CD14-positive monocyte (primary cell): ENCODE measurements at regions of chr5 and their contacts with region 1.

Region 1: GRCh38 chr5:173742432-173742816 is 126.0 kb upstream of the BOD1 start:
- DNase-seq: peak; percentile 63 to 73 (median 65)
- H3K4me3 ChIP-seq: peak overlapping the region in 1 of 3 experiments; percentile 47
- H3K4me3 Mint-ChIP-seq: peak overlapping the region in 1 of 2 donors; percentile 72
- H3K27ac ChIP-seq: peak overlapping the region; percentile 73 to 88
- H3K27ac Mint-ChIP-seq: peak overlapping the region; percentile 86 to 97 (median 95)
- H3K4me1 ChIP-seq: peaks cover 52 to 53% of the 10 kb centered on the region in 2 donors
- H3K4me1 Mint-ChIP-seq: peaks cover 67% of the 10 kb centered on the region
- H3K27me3 ChIP-seq: no peaks in the 10 kb centered on the region
- H3K27me3 Mint-ChIP-seq: peaks cover 0 to 9% (median 0%) of the 10 kb centered on the region in 3 donors
- CTCF ChIP-seq: no peak

Region 2: DNA sequence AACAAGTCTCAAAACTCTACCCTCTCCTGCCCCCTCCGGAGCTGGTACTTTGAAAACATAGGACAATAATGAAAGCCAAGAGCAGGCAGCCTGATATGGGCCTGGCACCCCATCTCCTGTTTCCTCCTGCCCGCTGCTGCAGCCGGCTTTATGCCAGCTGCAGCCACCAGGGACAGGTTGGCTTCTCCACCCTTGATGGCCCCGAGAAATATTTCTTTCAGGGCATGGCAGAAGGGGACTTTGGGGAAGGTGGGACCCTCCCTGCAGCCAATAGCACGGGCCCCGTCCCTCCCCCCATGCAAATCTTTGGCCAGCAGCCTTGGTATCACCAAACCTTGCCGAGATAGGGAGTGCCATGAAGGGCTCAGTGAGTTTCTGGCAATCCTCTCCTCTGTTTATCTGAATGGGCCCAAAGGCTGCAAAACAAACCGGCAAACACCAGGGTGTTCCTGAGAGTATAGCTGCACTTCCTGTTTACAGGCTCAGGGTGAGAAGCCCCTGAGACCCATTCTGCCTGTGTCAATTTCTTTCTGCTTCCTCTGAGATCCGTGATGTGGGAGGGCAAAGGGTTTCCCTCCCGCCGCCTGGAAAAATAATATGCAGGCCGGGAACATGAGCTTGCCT is 52.6 kb before region 1 on chr5:
- intact Hi-C with region 1: no loop called
- DNase-seq: peak in 1 of 3 donors; percentile 9
- H3K4me3 ChIP-seq: no peak overlapping the region
- H3K4me3 Mint-ChIP-seq: no peak overlapping the region
- H3K27ac ChIP-seq: no peak overlapping the region
- H3K27ac Mint-ChIP-seq: peak overlapping the region in 1 of 7 donors; percentile 40
- H3K4me1 ChIP-seq: peaks cover 0 to 9% of the 10 kb centered on the region in 2 donors
- H3K4me1 Mint-ChIP-seq: peaks cover 14% of the 10 kb centered on the region
- H3K27me3 ChIP-seq: no peaks in the 10 kb centered on the region
- H3K27me3 Mint-ChIP-seq: peaks cover 0 to 2% (median 0%) of the 10 kb centered on the region in 3 donors
- CTCF ChIP-seq: no peak

Region 3: DNA sequence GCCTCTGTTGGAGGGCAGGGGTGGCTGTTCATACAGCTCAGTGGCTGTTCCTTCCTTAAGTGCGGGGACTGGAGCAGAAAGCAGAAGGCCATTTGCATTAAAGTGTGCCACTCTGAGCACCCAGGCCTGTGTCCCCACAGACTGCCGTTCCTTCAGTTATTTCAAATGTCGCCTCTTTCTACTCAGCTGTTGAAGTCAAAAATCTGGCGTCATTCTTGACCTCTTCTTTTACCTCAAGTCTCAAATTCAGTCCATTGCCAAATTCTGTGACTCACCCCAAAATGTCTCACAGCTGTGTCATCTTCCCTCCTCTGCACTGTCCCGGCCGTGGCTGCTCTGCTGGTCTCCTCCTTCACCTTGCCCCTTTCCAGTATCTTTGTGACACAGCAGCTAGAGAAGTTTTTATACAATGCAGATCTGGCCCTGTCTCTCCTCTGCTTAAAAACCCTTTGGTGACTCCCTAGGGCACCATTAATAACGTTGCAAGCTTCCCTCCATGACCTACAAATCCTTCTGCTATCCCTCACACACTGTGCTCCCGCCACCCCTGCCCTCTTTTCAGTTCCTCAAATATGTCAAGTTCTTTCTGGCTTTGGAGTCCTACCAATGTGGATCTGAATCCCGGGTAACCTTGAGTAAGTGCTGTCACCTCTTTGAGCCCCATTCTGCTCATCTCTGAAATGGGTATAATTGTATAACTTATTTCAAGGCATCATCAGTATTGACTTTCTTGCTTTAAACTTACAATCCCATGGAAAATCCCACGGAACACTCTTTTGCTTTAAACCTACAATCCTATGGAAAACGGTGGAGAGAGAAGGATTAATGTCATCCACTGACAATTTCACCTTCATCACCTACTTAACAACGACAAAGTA is 27.6 kb before region 1 on chr5:
- intact Hi-C with region 1: loop called in 1 of 2 experiments (anchors 2 kb)
- DNase-seq: peak; percentile 15 to 97 (median 95)
- H3K4me3 ChIP-seq: peak overlapping the region in 1 of 3 experiments; percentile 7
- H3K4me3 Mint-ChIP-seq: peak overlapping the region; percentile 21 to 60
- H3K27ac ChIP-seq: peak overlapping the region in 1 of 2 donors; percentile 83
- H3K27ac Mint-ChIP-seq: peak overlapping the region in 5 of 7 donors; percentile 88 to 99 (median 95)
- H3K4me1 ChIP-seq: peaks cover 13 to 65% of the 10 kb centered on the region in 2 donors
- H3K4me1 Mint-ChIP-seq: peaks cover 57% of the 10 kb centered on the region
- H3K27me3 ChIP-seq: no peaks in the 10 kb centered on the region
- H3K27me3 Mint-ChIP-seq: peaks cover 4 to 8% (median 7%) of the 10 kb centered on the region in 3 donors
- CTCF ChIP-seq: no peak

Region 4: DNA sequence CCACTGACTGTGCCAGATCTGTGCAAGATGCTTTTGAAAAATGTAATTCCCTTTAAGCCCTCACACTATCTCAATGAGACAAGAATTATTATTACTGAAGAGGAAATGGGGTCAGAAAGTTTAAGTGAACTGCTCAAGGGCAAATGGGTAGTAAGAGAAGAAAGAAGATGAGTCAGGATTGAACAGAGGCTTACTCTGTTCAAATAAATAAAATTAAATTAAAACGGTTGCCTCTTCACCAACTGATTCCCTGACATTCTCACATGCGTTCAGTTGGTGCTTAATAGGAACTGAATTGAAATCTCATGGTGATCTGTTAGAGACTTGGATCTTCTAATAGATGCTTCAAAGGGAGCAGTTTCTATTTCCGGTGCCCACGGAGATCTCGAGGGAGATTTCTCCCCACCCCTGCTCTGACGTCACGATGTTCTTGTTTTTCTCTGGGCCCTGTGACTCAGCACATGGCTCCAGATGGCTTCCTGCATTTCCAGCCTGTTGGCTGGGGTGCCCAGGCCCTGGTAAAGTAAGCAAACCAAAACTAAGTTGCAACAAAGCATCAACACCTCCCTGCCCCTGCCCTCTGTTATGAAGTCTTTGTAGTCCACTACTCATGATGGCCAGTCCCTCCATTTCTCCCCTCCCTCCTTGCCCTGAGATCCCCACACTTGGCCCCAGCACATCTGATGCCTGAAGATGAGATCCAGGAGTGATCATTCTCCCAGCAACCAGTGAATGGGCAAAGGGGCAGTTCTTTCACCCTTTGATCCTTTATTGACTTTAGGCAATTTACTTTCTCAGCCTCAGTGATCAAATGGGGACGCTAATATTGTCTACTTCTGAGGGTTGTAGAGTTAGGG is 39.6 kb after region 1 on chr5:
- intact Hi-C with region 1: loop called in 1 of 2 experiments (anchors 5 kb)
- DNase-seq: peak; percentile 96 to 97 (median 96)
- H3K4me3 ChIP-seq: peak overlapping the region in 2 of 3 experiments; percentile 20 to 37
- H3K4me3 Mint-ChIP-seq: peak overlapping the region; percentile 32 to 37
- H3K27ac ChIP-seq: peak overlapping the region; percentile 93 to 100
- H3K27ac Mint-ChIP-seq: peak overlapping the region; percentile 95 to 100 (median 99)
- H3K4me1 ChIP-seq: peaks cover 83% of the 10 kb centered on the region in 2 donors
- H3K4me1 Mint-ChIP-seq: peaks cover 76% of the 10 kb centered on the region
- H3K27me3 ChIP-seq: no peaks in the 10 kb centered on the region
- H3K27me3 Mint-ChIP-seq: no peaks in the 10 kb centered on the region
- CTCF ChIP-seq: no peak